ENCODE measurements at regions of chr17 and their contacts with region 1.

Region 1: GRCh38 chr17:11644261-11645212 is 46.3 kb downstream of the DNAH9 start:
- DNase-seq: peak; percentile 24
- H3K4me3 Mint-ChIP-seq: no peak overlapping the region
- H3K27ac Mint-ChIP-seq: no peak overlapping the region
- H3K4me1 Mint-ChIP-seq: no peaks in the 10 kb centered on the region
- H3K27me3 Mint-ChIP-seq: no peaks in the 10 kb centered on the region

Region 2: GRCh38 chr17:10875979-10876555 is 768.5 kb before region 1 on chr17:
- CTCF ChIA-PET with region 1: interaction called, 11 read pairs
- POLR2A ChIA-PET with region 1: no interaction called
- DNase-seq: peak; percentile 18
- H3K4me3 Mint-ChIP-seq: no peak overlapping the region
- H3K27ac Mint-ChIP-seq: no peak overlapping the region
- H3K4me1 Mint-ChIP-seq: no peaks in the 10 kb centered on the region
- H3K27me3 Mint-ChIP-seq: no peaks in the 10 kb centered on the region

Measured in activated CD4-positive, alpha-beta memory T cell treated with anti-CD3 and anti-CD28 coated beads, Interleukin-2, amount 10 ng/mL, durations not matched to agents 7 days and 5 days (primary cell).